Mammary epithelial cell (primary cell): ENCODE measurements at regions of chr1 and their contacts with region 1.

Region 1: GRCh38 chr1:38651669-38652068 is 207.9 kb downstream of the RRAGC start:
- DNase-seq: peak; percentile 3
- H3K4me3 ChIP-seq: no peak overlapping the region
- H3K27ac ChIP-seq: no peak overlapping the region
- H3K4me1 ChIP-seq: no peaks in the 10 kb centered on the region
- H3K27me3 ChIP-seq: peaks cover 5% of the 10 kb centered on the region
- CTCF ChIP-seq: no peak

Region 2: GRCh38 chr1:38699330-38700076 is 47.8 kb after region 1 on chr1:
- CTCF ChIA-PET with region 1: no interaction called
- dilution Hi-C with region 1: loop called (anchors 5 kb)
- in situ Hi-C with region 1: no loop called
- intact Hi-C with region 1: no loop called
- DNase-seq: no peak
- H3K4me3 ChIP-seq: no peak overlapping the region
- H3K27ac ChIP-seq: no peak overlapping the region
- H3K4me1 ChIP-seq: no peaks in the 10 kb centered on the region
- H3K27me3 ChIP-seq: no peaks in the 10 kb centered on the region
- CTCF ChIP-seq: no peak

Region 3: GRCh38 chr1:38735641-38736161 is 84.0 kb after region 1 on chr1:
- CTCF ChIA-PET with region 1: no interaction called
- dilution Hi-C with region 1: loop called (anchors 5 kb)
- in situ Hi-C with region 1: no loop called
- intact Hi-C with region 1: no loop called
- DNase-seq: peak; percentile 41
- H3K4me3 ChIP-seq: no peak overlapping the region
- H3K27ac ChIP-seq: no peak overlapping the region
- H3K4me1 ChIP-seq: peaks cover 8% of the 10 kb centered on the region
- H3K27me3 ChIP-seq: no peaks in the 10 kb centered on the region
- CTCF ChIP-seq: no peak

Region 4: GRCh38 chr1:38891753-38892152 is 240.1 kb after region 1 on chr1:
- CTCF ChIA-PET with region 1: no interaction called
- dilution Hi-C with region 1: no loop called
- in situ Hi-C with region 1: no loop called
- intact Hi-C with region 1: no loop called
- DNase-seq: peak; percentile 11
- H3K4me3 ChIP-seq: no peak overlapping the region
- H3K27ac ChIP-seq: no peak overlapping the region
- H3K4me1 ChIP-seq: no peaks in the 10 kb centered on the region
- H3K27me3 ChIP-seq: no peaks in the 10 kb centered on the region
- CTCF ChIP-seq: peak in 1 of 2 donors; percentile 15